ENCODE measurements at regions of chr4 and their contacts with region 1.

Region 1: GRCh38 chr4:130056286-130056685 is 960.3 kb downstream of the C4orf33 start:
- DNase-seq: no peak
- H3K4me3 ChIP-seq: no peak overlapping the region
- H3K27ac ChIP-seq: no peak overlapping the region
- H3K4me1 ChIP-seq: no peaks in the 10 kb centered on the region
- H3K27me3 ChIP-seq: no peaks in the 10 kb centered on the region
- CTCF ChIP-seq: no peak
- EP300 ChIP-seq: no peak
- POLR2A ChIP-seq: no peak

Region 2: DNA sequence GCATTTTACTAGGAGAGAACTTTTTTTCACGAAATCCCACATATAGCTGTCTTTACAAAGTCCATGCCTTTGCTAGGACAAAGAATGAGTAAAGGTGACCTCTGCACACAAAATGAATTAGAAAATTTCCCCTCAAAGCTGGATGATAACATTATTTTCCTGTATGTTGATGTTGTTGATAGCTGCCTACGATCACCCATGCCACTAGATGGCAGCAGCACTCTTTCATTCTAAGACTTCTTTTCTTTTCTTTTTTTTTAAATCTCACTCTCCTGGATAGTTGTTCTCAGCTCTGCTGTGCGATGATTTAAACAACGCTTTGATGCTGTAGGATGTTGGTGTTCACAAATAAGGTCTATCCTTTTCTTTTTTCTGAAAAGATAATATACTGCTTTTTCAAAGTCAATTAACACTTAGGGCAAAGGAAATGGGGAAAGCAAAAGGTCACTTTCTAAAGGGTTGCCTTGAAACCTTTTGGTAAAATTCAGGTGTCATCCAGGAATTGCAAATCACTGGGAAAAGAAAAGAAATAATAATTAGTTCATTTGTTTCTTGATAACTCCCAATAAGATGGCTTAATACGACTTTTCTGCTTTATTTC is 693.5 kb before region 1 on chr4:
- in situ Hi-C with region 1: no loop called
- intact Hi-C with region 1: loop called (anchors 5 kb)
- DNase-seq: peak; percentile 51
- H3K4me3 ChIP-seq: no peak overlapping the region
- H3K27ac ChIP-seq: no peak overlapping the region
- H3K4me1 ChIP-seq: peaks cover 0 to 8% (median 0%) of the 10 kb centered on the region in 4 donors
- H3K27me3 ChIP-seq: no peaks in the 10 kb centered on the region
- CTCF ChIP-seq: peak; percentile 62 to 83 (median 75)
- EP300 ChIP-seq: no peak
- POLR2A ChIP-seq: no peak

Region 3: DNA sequence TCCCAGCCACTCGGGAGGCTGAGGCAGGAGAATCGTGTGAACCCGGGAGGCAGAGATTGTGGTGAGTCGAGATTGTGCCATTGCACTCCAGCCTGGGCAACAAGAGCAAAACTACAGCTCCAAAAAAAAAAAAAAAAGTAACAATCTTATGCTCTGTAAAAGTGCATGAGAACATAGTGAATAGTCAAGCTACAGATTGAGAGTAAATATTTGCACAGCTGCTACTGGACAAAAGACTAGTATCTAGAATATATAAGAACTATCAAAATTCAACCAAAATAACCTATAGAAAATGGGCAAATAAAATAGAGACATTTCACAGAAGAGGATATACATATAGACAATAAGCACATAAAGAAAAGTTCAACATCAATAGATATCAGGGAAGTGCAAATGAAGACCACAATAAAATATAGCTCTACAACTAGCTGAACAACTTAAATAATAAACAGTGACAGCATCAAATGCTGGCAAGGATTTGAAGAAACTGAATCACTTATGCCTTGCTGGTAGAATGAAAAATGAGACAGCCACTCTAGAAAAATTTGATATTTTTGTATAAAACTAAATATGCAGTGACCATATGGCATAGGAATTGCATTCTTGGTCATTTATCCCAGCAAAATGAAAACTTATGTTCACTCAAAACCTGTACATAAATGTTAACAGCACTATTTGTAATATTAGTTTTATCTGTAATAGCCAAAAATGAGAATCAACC is 141.5 kb after region 1 on chr4:
- in situ Hi-C with region 1: no loop called
- intact Hi-C with region 1: no loop called
- DNase-seq: no peak
- H3K4me3 ChIP-seq: no peak overlapping the region
- H3K27ac ChIP-seq: no peak overlapping the region
- H3K4me1 ChIP-seq: no peaks in the 10 kb centered on the region
- H3K27me3 ChIP-seq: no peaks in the 10 kb centered on the region
- CTCF ChIP-seq: no peak
- EP300 ChIP-seq: no peak
- POLR2A ChIP-seq: no peak

Measured in transverse colon (tissue), 4 donors.